Caco-2 (cell line): ENCODE measurements at regions of chr6 and their contacts with region 1.

Region 1: GRCh38 chr6:21593412-21593926 is at the start of gene SOX4:
- DNase-seq: peak; percentile 95 to 97
- H3K4me3 ChIP-seq: peak within 1 kb of the TSS; percentile 99
- H3K4me3 Mint-ChIP-seq: peak within 1 kb of the TSS; percentile 20
- H3K27ac Mint-ChIP-seq: no peak within 1 kb of the TSS
- H3K4me1 ChIP-seq: peaks cover 9% of the 10 kb centered on the region
- H3K4me1 Mint-ChIP-seq: peaks cover 6% of the 10 kb centered on the region
- H3K27me3 ChIP-seq: no peaks in the 10 kb centered on the region
- H3K27me3 Mint-ChIP-seq: no peaks in the 10 kb centered on the region
- CTCF ChIP-seq: no peak
- total RNA-seq, gene SOX4: 76.8 and 77.3 TPM in 2 replicates

Region 2: GRCh38 chr6:19866985-19867627 is 1726.4 kb before region 1 on chr6:
- CTCF ChIA-PET with region 1: no interaction called
- POLR2A ChIA-PET with region 1: no interaction called
- intact Hi-C with region 1: no loop called
- DNase-seq: no peak
- H3K4me3 ChIP-seq: no peak overlapping the region
- H3K4me3 Mint-ChIP-seq: no peak overlapping the region
- H3K27ac Mint-ChIP-seq: no peak overlapping the region
- H3K4me1 ChIP-seq: no peaks in the 10 kb centered on the region
- H3K4me1 Mint-ChIP-seq: no peaks in the 10 kb centered on the region
- H3K27me3 ChIP-seq: no peaks in the 10 kb centered on the region
- H3K27me3 Mint-ChIP-seq: peaks cover 13% of the 10 kb centered on the region
- CTCF ChIP-seq: no peak

Region 3: DNA sequence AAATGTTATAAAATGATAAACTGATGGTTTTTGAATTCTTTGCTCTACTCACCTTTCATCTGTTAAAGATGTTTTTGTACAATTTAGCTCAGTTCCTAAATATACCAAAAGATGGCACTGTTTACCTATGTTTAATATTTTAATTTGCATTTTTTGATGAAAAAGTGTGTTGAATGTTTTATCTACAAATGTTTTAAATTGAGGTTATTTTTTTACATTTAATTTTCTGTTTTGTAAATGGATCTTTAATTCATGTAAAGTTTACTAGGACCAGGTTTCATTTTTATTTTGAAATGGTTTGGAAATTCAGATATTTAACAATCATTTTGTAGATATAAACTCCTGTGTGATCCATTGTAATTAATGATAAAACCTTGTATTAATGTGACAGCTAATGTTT is 1029.2 kb before region 1 on chr6:
- CTCF ChIA-PET with region 1: interaction called, 15 read pairs
- POLR2A ChIA-PET with region 1: interaction called, 5 read pairs
- intact Hi-C with region 1: loop called (anchors 1 kb)
- DNase-seq: no peak
- H3K4me3 ChIP-seq: no peak overlapping the region
- H3K4me3 Mint-ChIP-seq: no peak overlapping the region
- H3K27ac Mint-ChIP-seq: no peak overlapping the region
- H3K4me1 ChIP-seq: no peaks in the 10 kb centered on the region
- H3K4me1 Mint-ChIP-seq: no peaks in the 10 kb centered on the region
- H3K27me3 ChIP-seq: no peaks in the 10 kb centered on the region
- H3K27me3 Mint-ChIP-seq: no peaks in the 10 kb centered on the region
- CTCF ChIP-seq: peak; percentile 10 to 51

Region 4: DNA sequence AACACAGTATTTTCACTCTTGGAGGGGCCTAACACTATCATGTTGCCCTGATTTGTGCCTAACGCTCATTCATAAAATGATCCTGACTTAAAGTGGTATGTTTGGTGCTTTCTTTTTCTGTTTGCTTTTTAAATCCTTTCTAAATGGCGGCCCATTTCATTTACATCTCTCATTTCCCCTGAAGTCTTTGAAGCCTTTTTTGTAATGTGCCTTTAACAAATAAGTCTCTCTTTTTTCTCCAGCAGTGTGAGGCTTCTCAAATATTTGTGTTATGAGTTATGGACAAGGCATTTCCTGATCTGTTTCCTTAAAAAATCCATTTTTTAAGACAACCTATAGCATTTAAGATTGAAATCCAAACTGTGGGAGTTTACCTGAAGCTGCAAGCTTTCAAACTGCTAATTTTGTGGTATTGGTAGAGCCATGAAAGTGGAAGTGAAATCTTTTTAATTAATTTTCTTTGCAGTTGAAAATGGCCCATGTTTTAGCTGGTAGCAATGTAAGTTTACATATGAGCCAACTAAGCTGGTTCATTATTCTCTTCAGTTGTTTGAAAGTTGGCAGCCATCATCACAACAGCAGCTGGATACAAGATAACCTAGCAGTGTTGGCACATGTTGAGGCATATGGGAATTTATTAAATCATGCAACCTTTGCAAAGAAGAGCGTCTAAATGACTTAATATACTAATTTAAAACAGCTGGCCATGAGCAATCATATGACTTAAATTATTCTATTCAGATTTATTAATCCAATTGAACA is 589.5 kb before region 1 on chr6:
- CTCF ChIA-PET with region 1: no interaction called
- POLR2A ChIA-PET with region 1: no interaction called
- intact Hi-C with region 1: loop called (anchors 1 kb)
- DNase-seq: peak in 1 of 2 experiments; percentile 36
- H3K4me3 ChIP-seq: no peak overlapping the region
- H3K4me3 Mint-ChIP-seq: no peak overlapping the region
- H3K27ac Mint-ChIP-seq: peak overlapping the region; percentile 7
- H3K4me1 ChIP-seq: peaks cover 20% of the 10 kb centered on the region
- H3K4me1 Mint-ChIP-seq: peaks cover 18% of the 10 kb centered on the region
- H3K27me3 ChIP-seq: no peaks in the 10 kb centered on the region
- H3K27me3 Mint-ChIP-seq: no peaks in the 10 kb centered on the region
- CTCF ChIP-seq: no peak

Region 5: GRCh38 chr6:21381335-21382217 is 211.9 kb before region 1 on chr6:
- CTCF ChIA-PET with region 1: no interaction called
- POLR2A ChIA-PET with region 1: no interaction called
- intact Hi-C with region 1: loop called (anchors 5 kb)
- DNase-seq: peak; percentile 66 to 78
- H3K4me3 ChIP-seq: no peak overlapping the region
- H3K4me3 Mint-ChIP-seq: peak overlapping the region; percentile 29
- H3K27ac Mint-ChIP-seq: peak overlapping the region; percentile 85
- H3K4me1 ChIP-seq: peaks cover 64% of the 10 kb centered on the region
- H3K4me1 Mint-ChIP-seq: peaks cover 61% of the 10 kb centered on the region
- H3K27me3 ChIP-seq: no peaks in the 10 kb centered on the region
- H3K27me3 Mint-ChIP-seq: no peaks in the 10 kb centered on the region
- CTCF ChIP-seq: no peak

Region 6: DNA sequence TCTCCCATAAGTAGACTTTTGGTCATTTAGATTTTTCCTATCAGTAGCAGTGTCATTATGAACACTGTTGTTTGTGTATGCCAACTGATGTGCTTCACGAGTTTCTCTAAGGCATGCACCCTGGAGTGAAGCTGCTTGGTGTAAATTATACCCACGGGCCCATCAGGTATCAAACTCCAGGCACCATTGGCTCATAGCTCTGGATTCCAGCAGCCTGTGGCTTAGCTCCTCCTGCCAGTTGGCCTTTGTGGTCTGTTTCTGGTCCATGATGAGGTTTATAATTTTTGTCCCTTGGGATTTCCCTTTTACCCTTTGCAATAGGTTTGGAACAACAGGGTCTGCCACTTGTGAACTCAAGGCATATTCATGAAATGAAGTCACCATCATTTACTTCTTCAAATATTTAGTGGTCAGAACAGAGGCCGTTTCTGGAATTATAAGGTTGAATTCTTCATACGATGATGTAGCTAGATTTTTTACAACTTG is 352.9 kb after region 1 on chr6:
- CTCF ChIA-PET with region 1: no interaction called
- POLR2A ChIA-PET with region 1: interaction called, 6 read pairs
- intact Hi-C with region 1: loop called (anchors 2 kb)
- DNase-seq: no peak
- H3K4me3 ChIP-seq: no peak overlapping the region
- H3K4me3 Mint-ChIP-seq: no peak overlapping the region
- H3K27ac Mint-ChIP-seq: peak overlapping the region; percentile 87
- H3K4me1 ChIP-seq: peaks cover 45% of the 10 kb centered on the region
- H3K4me1 Mint-ChIP-seq: peaks cover 28% of the 10 kb centered on the region
- H3K27me3 ChIP-seq: no peaks in the 10 kb centered on the region
- H3K27me3 Mint-ChIP-seq: no peaks in the 10 kb centered on the region
- CTCF ChIP-seq: no peak

Region 7: GRCh38 chr6:22437670-22438069 is 844.2 kb after region 1 on chr6:
- CTCF ChIA-PET with region 1: no interaction called
- POLR2A ChIA-PET with region 1: interaction called, 11 read pairs
- intact Hi-C with region 1: no loop called
- DNase-seq: no peak
- H3K4me3 ChIP-seq: no peak overlapping the region
- H3K4me3 Mint-ChIP-seq: no peak overlapping the region
- H3K27ac Mint-ChIP-seq: no peak overlapping the region
- H3K4me1 ChIP-seq: no peaks in the 10 kb centered on the region
- H3K4me1 Mint-ChIP-seq: no peaks in the 10 kb centered on the region
- H3K27me3 ChIP-seq: no peaks in the 10 kb centered on the region
- H3K27me3 Mint-ChIP-seq: no peaks in the 10 kb centered on the region
- CTCF ChIP-seq: no peak

Region 8: GRCh38 chr6:22598339-22598738 is 1004.9 kb after region 1 on chr6:
- CTCF ChIA-PET with region 1: no interaction called
- POLR2A ChIA-PET with region 1: no interaction called
- intact Hi-C with region 1: no loop called
- DNase-seq: no peak
- H3K4me3 ChIP-seq: no peak overlapping the region
- H3K4me3 Mint-ChIP-seq: no peak overlapping the region
- H3K27ac Mint-ChIP-seq: no peak overlapping the region
- H3K4me1 ChIP-seq: peaks cover 7% of the 10 kb centered on the region
- H3K4me1 Mint-ChIP-seq: peaks cover 11% of the 10 kb centered on the region
- H3K27me3 ChIP-seq: no peaks in the 10 kb centered on the region
- H3K27me3 Mint-ChIP-seq: peaks cover 4% of the 10 kb centered on the region
- CTCF ChIP-seq: no peak

Region 9: DNA sequence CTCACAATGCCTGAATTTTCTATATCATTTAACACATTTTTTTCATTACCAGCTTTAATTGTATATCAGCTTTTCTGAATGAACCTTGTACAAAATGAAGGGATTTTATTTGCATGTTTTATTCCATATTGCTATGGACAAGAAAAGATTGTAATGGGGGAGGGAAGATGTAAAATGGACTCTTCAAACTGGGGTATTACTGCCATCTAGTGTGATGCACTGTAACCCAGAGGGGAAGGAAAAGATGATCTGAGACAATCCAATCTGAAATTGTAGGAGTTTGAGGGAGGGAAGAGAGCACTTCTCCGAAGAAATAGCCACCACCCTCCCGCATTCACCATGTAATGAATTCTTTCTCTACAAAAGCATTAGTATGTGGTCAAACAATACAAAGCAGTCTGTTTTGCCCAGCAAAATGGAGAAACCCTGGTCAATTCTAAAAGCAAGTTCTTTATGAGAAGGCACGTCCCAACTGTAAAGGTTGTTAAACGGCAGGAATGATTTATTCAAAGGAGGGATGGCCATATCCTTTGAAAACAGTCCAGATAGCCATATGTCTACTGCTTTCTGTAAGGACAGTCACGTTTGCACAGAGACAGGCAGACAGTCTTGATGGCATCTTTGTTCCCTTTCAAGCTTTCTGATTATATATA is 1853.1 kb after region 1 on chr6:
- CTCF ChIA-PET with region 1: no interaction called
- POLR2A ChIA-PET with region 1: no interaction called
- intact Hi-C with region 1: loop called (anchors 5 kb)
- DNase-seq: peak in 1 of 2 experiments; percentile 25
- H3K4me3 ChIP-seq: no peak overlapping the region
- H3K4me3 Mint-ChIP-seq: no peak overlapping the region
- H3K27ac Mint-ChIP-seq: no peak overlapping the region
- H3K4me1 ChIP-seq: no peaks in the 10 kb centered on the region
- H3K4me1 Mint-ChIP-seq: no peaks in the 10 kb centered on the region
- H3K27me3 ChIP-seq: no peaks in the 10 kb centered on the region
- H3K27me3 Mint-ChIP-seq: no peaks in the 10 kb centered on the region
- CTCF ChIP-seq: peak; percentile 31 to 47